Transverse colon (tissue), 4 donors: ENCODE measurements at regions of chr2 and their contacts with region 1.

Region 1: GRCh38 chr2:29053670-29054400 is 20.5 kb downstream of the PCARE start:
- DNase-seq: no peak
- H3K4me3 ChIP-seq: no peak overlapping the region
- H3K27ac ChIP-seq: no peak overlapping the region
- H3K4me1 ChIP-seq: no peaks in the 10 kb centered on the region
- H3K27me3 ChIP-seq: no peaks in the 10 kb centered on the region
- CTCF ChIP-seq: no peak
- EP300 ChIP-seq: no peak
- POLR2A ChIP-seq: no peak

Region 2: GRCh38 chr2:28463893-28464292 is 589.9 kb before region 1 on chr2:
- in situ Hi-C with region 1: no loop called
- intact Hi-C with region 1: no loop called
- DNase-seq: no peak
- H3K4me3 ChIP-seq: no peak overlapping the region
- H3K27ac ChIP-seq: no peak overlapping the region
- H3K4me1 ChIP-seq: no peaks in the 10 kb centered on the region
- H3K27me3 ChIP-seq: no peaks in the 10 kb centered on the region
- CTCF ChIP-seq: no peak
- EP300 ChIP-seq: no peak
- POLR2A ChIP-seq: no peak

Region 3: GRCh38 chr2:28991021-28991420 is 62.8 kb before region 1 on chr2:
- in situ Hi-C with region 1: no loop called
- intact Hi-C with region 1: no loop called
- DNase-seq: peak; percentile 51
- H3K4me3 ChIP-seq: no peak overlapping the region
- H3K27ac ChIP-seq: peak overlapping the region; percentile 32 to 80 (median 68)
- H3K4me1 ChIP-seq: peaks cover 0 to 23% (median 16%) of the 10 kb centered on the region in 4 donors
- H3K27me3 ChIP-seq: no peaks in the 10 kb centered on the region
- CTCF ChIP-seq: no peak
- EP300 ChIP-seq: no peak
- POLR2A ChIP-seq: no peak

Region 4: GRCh38 chr2:29032189-29032588 is 21.6 kb before region 1 on chr2:
- in situ Hi-C with region 1: no loop called
- intact Hi-C with region 1: loop called (anchors 1 kb)
- DNase-seq: no peak
- H3K4me3 ChIP-seq: no peak overlapping the region
- H3K27ac ChIP-seq: no peak overlapping the region
- H3K4me1 ChIP-seq: no peaks in the 10 kb centered on the region
- H3K27me3 ChIP-seq: no peaks in the 10 kb centered on the region
- CTCF ChIP-seq: no peak
- EP300 ChIP-seq: no peak
- POLR2A ChIP-seq: no peak